ENCODE measurements at regions of chr5 and their contacts with region 1.

Region 1: DNA sequence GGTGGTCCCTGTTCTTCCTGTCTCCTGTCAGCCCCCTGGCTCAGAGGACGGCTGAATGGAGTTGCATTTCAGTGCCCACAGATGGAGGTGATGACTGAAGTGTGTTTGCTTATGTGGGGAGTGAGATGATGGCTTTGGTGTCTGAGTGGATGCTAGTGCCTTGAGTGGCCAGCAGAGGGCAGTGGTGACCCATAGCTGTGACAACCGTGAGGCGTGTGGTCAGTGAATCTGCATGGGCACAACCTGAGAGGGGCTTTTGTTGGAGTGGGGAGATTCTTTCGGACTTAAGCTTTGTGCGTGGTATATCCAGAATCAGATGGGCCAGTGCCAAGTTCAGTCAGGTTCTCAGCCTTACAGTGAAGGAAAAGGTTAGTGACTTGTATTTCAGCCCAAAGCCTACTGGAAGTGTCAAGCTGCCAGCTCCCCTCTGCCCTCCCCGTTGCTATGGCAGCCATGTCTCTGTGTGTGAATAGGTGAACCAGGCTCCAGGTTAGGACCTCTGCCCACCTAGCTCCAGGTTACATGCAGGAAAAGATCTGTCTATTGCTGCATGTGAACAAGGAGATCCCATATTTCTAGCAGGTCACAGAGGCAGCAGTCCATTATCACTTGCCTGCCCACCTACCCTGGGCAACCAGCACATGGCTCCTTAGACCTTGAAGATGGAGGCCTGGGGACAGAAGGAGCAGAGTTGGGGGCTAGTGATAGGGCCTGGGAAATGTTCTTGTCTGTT is 14.7 kb upstream of the CXXC5 start:
- DNase-seq: peak; percentile 82
- H3K4me3 Mint-ChIP-seq: no peak overlapping the region
- H3K27ac Mint-ChIP-seq: peak overlapping the region; percentile 55
- H3K4me1 Mint-ChIP-seq: peaks cover 40% of the 10 kb centered on the region
- H3K27me3 Mint-ChIP-seq: no peaks in the 10 kb centered on the region
- CTCF ChIP-seq: peak; percentile 98

Region 2: DNA sequence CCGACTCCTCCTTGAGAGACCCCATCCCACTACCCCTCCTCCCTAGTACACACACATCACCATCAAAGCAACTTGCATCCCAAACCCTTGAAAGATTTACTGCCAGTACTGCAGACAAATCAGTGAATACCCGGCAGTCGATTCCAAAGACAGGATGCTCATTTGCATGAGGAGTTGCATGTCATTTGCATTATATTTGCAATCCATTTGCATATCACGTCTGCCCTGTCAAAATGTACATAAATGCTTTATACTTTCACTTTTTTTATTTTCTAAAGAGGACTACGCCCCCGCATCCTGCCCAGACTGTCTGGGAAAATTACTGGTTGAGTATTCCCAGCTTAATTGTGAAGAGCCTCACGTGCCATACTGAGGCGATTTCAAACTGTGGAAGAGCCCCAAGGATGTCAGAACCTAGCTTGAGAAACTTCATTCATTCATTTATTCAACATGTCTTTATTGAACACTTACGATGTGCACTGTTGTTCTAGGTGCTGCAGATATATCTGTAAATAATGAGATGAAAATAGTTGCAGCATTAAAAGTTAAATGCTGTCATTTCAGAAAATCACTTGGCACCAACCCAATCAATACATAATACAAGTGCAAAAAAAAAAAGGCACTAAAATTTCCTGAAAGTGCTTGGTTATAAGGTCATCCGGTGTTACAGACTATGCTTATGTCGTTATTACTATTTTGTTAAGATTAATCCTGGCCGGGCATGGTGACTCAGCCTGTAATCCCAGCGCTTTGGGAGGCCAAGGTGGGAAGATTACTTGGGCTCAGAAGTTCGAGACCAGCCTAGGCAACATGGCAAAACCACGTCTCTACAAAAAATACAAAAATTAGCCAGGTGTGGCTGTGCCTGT is 418.1 kb before region 1 on chr5:
- CTCF ChIA-PET with region 1: no interaction called
- intact Hi-C with region 1: no loop called
- DNase-seq: no peak
- H3K4me3 Mint-ChIP-seq: no peak overlapping the region
- H3K27ac Mint-ChIP-seq: no peak overlapping the region
- H3K4me1 Mint-ChIP-seq: no peaks in the 10 kb centered on the region
- H3K27me3 Mint-ChIP-seq: no peaks in the 10 kb centered on the region
- CTCF ChIP-seq: no peak

Region 3: GRCh38 chr5:139574641-139575312 is 58.7 kb before region 1 on chr5:
- CTCF ChIA-PET with region 1: no interaction called
- intact Hi-C with region 1: no loop called
- DNase-seq: peak; percentile 24
- H3K4me3 Mint-ChIP-seq: no peak overlapping the region
- H3K27ac Mint-ChIP-seq: no peak overlapping the region
- H3K4me1 Mint-ChIP-seq: peaks cover 27% of the 10 kb centered on the region
- H3K27me3 Mint-ChIP-seq: no peaks in the 10 kb centered on the region
- CTCF ChIP-seq: peak; percentile 74

Region 4: GRCh38 chr5:139660923-139661814 is 27.7 kb after region 1 on chr5:
- CTCF ChIA-PET with region 1: interaction called, 18 read pairs
- intact Hi-C with region 1: no loop called
- DNase-seq: peak; percentile 92
- H3K4me3 Mint-ChIP-seq: peak overlapping the region; percentile 64
- H3K27ac Mint-ChIP-seq: peak overlapping the region; percentile 80
- H3K4me1 Mint-ChIP-seq: peaks cover 68% of the 10 kb centered on the region
- H3K27me3 Mint-ChIP-seq: no peaks in the 10 kb centered on the region
- CTCF ChIP-seq: no peak

Region 5: DNA sequence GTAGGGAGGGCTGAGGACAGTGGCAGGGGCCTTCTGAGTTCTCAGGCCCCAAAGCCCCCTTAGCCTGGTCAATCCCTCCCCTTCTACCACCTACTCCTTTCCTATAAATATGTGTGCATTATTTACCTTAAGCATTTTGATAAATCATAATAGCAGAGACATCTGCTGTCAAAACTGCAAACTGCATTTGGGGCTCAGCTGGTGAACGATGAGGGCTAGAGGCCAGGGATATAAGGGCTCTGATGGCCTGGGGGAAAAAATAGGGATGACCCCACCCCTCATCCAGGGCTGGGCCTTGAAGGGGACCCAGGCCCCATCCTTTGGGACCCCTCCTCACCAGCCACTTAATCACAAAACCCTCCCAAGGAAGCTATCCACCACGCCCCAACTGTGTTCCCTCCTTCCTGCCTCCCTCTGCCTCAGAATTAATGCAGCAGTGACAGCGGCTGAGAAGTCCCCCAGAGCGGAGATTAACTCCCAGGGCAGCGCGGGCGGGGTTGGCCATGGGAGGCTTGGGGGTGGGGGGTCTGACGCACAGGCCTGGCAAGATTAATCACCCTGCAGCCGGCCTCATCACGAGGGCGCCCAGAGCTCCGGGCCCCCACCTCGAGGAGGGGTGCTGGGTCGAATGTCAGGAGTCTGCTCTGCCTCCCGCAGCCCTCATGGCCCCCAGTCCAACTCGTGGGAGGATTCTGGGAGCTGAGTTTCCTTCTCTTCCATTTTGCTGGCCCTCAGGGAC is 56.8 kb after region 1 on chr5:
- CTCF ChIA-PET with region 1: interaction called, 102 read pairs
- intact Hi-C with region 1: loop called (anchors 1 kb)
- DNase-seq: peak; percentile 52
- H3K4me3 Mint-ChIP-seq: no peak overlapping the region
- H3K27ac Mint-ChIP-seq: peak overlapping the region; percentile 6
- H3K4me1 Mint-ChIP-seq: peaks cover 15% of the 10 kb centered on the region
- H3K27me3 Mint-ChIP-seq: no peaks in the 10 kb centered on the region
- CTCF ChIP-seq: peak; percentile 52

Region 6: GRCh38 chr5:139765409-139766217 is 132.2 kb after region 1 on chr5:
- CTCF ChIA-PET with region 1: interaction called, 87 read pairs
- intact Hi-C with region 1: loop called (anchors 1 kb)
- DNase-seq: peak; percentile 91
- H3K4me3 Mint-ChIP-seq: peak overlapping the region; percentile 57
- H3K27ac Mint-ChIP-seq: no peak overlapping the region
- H3K4me1 Mint-ChIP-seq: peaks cover 12% of the 10 kb centered on the region
- H3K27me3 Mint-ChIP-seq: peaks cover 9% of the 10 kb centered on the region
- CTCF ChIP-seq: peak; percentile 100

Measured in Calu3 (cell line).